Posterior cingulate gyrus (tissue), 11 donors: ENCODE measurements at regions of chrX and their contacts with region 1.

Region 1: GRCh38 chrX:54495814-54496516 is at the start of gene FGD1:
- DNase-seq: peak in 9 of 10 donors; percentile 43 to 93 (median 64)

Region 2: DNA sequence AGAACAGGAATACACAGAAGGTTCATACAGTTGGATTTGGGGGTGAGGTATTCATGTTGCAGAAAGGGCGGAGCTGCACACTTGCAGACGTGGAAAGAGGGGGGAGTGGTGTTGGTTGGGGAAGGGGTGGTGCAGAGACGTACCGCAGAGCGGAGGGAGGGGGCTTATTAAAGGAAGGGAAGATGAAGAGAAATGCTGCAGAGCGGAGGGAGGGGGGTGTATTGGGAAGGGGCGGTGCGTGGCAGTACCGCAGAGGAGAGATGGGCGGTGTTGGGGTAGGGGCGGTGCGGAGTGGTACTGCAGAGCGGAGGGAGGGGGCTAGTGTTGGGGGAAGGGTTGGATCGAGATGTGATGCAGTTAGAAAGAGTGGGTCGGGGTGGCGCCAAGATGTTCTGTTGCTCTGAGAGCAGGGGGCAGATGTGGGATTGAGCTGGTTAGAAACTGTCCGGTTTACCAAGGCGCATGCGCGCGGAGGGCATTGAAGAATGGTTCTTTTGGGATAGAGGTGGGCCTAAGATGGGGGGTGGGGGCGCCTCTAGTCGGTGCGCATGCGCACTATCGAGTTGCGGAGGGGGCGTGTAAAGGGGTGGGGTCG is 425.6 kb after region 1 on chrX:
- intact Hi-C with region 1: loop called (anchors 10 kb)
- DNase-seq: peak; percentile 50 to 94 (median 73)